Posterior cingulate gyrus (tissue), 11 donors: ENCODE measurements at regions of chr3 and their contacts with region 1.

Region 1: DNA sequence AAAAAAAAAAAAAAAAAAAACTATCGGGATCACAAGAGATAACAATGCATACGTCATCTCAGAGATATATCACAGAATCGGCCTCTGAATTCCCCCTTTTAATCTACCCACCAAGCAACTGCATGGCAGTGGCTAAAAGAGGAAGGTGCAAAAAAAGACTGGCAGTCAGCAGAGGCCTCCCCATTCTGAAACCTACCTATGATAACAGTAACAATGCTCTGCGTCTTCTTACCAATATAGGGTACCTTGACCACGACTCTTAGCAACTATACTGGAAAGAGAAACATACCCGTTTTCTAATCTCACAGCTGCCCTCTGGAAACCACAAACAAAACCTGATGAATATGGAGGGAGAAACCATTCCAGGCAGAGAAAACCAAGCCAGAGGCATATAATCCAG is 106.9 kb downstream of the ULK4 start:
- DNase-seq: no peak

Region 2: GRCh38 chr3:41026394-41027177 is 828.4 kb before region 1 on chr3:
- intact Hi-C with region 1: loop called (anchors 5 kb)
- DNase-seq: peak in 5 of 10 donors; percentile 14 to 84 (median 22)

Region 3: GRCh38 chr3:41915353-41915752 is 60.4 kb after region 1 on chr3:
- intact Hi-C with region 1: no loop called
- DNase-seq: no peak